Ovary (tissue), 10 donors: ENCODE measurements at regions of chrX and their contacts with region 1.

Region 1: DNA sequence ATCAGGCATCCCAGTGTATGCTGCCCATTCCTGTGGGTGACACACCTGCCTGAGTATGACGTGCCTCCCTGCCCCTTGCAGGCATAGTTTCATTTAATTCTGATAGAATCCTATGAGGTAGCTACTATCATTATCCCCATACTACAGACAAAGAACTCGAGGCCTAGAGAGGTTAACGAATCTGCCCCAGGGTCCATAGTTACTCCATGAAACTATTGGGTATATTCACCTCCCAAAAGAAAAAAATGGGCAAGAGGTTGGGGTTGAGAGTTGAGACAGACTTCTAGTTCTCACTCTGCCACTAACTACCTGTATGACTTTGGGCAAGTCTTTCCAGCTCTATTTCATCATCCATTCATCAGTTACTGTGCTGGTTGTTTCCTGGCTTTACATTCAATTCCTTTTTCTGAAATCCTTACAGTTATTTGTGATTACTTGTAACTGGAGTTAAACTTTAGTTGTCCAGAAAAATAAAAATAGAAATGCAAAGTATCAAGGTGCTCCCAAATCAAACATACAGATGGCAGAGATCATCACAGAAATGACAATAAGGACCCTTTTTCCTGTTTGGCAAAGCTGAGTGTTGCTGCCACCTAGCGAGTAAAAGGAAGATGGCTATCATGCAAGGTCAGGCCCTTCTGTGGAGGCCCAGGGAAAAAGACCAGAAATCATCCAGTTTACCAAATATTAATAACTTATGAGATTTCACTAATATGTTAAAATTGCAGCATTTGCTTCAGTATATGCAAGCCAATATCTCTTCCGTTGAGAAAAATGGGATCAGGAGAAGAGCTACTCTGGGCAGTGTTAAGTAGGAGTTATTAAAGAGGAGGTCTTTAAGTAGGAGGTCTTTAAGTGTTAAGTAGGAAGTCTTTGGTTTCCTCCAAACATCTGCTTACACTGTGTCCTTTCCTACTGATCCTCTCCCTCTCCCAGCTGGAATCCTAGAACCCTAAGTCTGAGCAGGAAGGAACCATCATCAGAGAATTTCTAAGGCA is 17.1 kb upstream of the MAP7D3 start:
- DNase-seq: peak in 2 of 5 donors; percentile 32 to 50
- H3K4me3 ChIP-seq: no peak overlapping the region
- H3K27ac ChIP-seq: no peak overlapping the region
- H3K4me1 ChIP-seq: no peaks in the 10 kb centered on the region
- H3K27me3 ChIP-seq: no peaks in the 10 kb centered on the region
- CTCF ChIP-seq: peak; percentile 25 to 44 (median 25)
- EP300 ChIP-seq: no peak
- POLR2A ChIP-seq: no peak

Region 2: GRCh38 chrX:136147315-136147901 is 120.9 kb before region 1 on chrX and contains the start of gene FHL1:
- intact Hi-C with region 1: no loop called
- DNase-seq: peak; percentile 63 to 79 (median 75)
- H3K4me3 ChIP-seq: peak within 1 kb of the TSS; percentile 66
- H3K27ac ChIP-seq: peak within 1 kb of the TSS; percentile 60 to 65
- H3K4me1 ChIP-seq: peaks cover 2% of the 10 kb centered on the region
- H3K27me3 ChIP-seq: no peaks in the 10 kb centered on the region
- CTCF ChIP-seq: no peak
- EP300 ChIP-seq: no peak
- POLR2A ChIP-seq: peak; percentile 29
- total RNA-seq, gene FHL1: 62.0 to 313 (median 98.5) TPM

Region 3: GRCh38 chrX:136209016-136209738 is 59.2 kb before region 1 on chrX:
- intact Hi-C with region 1: loop called in 1 of 4 experiments (anchors 10 kb)
- DNase-seq: peak; percentile 46 to 71 (median 67)
- H3K4me3 ChIP-seq: no peak overlapping the region
- H3K27ac ChIP-seq: peak overlapping the region in 1 of 2 donors; percentile 14
- H3K4me1 ChIP-seq: no peaks in the 10 kb centered on the region
- H3K27me3 ChIP-seq: no peaks in the 10 kb centered on the region
- CTCF ChIP-seq: peak; percentile 20 to 60 (median 56)
- EP300 ChIP-seq: no peak
- POLR2A ChIP-seq: no peak

Region 4: DNA sequence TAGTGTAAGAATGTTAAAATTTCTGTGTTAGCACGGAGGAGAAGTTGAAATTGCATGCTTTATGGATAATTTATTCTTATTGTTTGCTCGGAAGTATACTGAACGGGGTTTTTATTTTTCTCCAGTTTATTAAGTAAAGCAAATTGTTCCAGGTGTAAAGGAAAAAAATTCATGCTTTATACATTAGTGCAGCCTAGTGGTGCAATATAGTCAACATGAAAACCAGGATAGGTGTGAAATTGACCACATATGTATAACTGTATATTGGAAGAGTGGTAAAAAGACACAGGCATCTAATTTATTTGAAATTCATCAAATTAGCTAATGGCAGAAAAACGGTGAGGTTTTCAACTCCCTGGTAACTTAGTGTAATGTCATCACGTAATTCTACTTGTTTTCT is 220.4 kb after region 1 on chrX:
- intact Hi-C with region 1: loop called in 1 of 4 experiments (anchors 10 kb)
- DNase-seq: no peak
- H3K4me3 ChIP-seq: no peak overlapping the region
- H3K27ac ChIP-seq: no peak overlapping the region
- H3K4me1 ChIP-seq: no peaks in the 10 kb centered on the region
- H3K27me3 ChIP-seq: no peaks in the 10 kb centered on the region
- CTCF ChIP-seq: peak in 1 of 3 donors; percentile 7
- EP300 ChIP-seq: no peak
- POLR2A ChIP-seq: no peak